ENCODE measurements at regions of chr14 and their contacts with region 1.

Region 1: DNA sequence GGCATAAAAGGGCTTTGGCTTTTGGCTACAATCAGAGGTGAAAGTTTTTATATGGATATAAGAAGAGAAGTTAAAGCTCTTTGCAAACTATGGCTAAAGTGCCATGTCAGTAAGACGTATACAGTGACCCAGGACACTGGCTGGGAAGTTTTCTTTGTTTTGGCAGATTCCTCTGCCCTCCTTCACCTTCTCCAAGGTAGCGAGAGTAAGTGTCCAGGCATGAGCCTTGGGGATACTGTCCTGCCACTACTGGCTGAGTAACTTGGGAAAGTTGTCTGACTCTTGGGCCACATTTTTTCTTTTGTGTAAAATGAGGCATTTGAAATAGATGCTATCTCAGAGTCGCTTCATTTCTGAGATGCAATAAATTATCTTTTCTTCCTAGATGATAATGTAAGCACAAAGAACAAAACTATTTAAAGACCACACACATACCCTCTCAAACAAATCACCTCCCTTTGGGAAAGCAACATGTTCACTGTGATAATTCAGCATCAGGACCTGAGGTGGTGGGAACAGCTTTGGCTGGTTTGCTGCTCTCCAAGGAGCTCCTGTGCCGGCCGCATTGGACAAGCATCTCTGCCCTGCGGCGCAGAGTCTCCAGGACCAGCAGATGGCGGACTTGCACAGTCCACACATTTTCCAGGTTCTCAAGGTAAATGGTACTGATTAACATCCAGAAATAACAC is 106.3 kb downstream of the PTCSC3 start:
- H3K4me3 ChIP-seq: no peak overlapping the region
- H3K27ac ChIP-seq: no peak overlapping the region
- H3K4me1 ChIP-seq: 0 out of 2 replicates have a peak, but pooled peaks cover 3% of the 10 kb centered on the region
- CTCF ChIP-seq: peak; percentile 58; the same call in 1 of the 2 replicates

Region 2: GRCh38 chr14:35965400-35965799 is 104.8 kb before region 1 on chr14:
- CTCF ChIA-PET with region 1: interaction called, 18 read pairs
- POLR2A ChIA-PET with region 1: no interaction called
- H3K4me3 ChIP-seq: no peak overlapping the region
- H3K27ac ChIP-seq: no peak overlapping the region
- H3K4me1 ChIP-seq: no peaks in the 10 kb centered on the region
- CTCF ChIP-seq: no peak

Region 3: GRCh38 chr14:36083317-36083716 is 13.1 kb after region 1 on chr14:
- CTCF ChIA-PET with region 1: interaction called, 29 read pairs
- POLR2A ChIA-PET with region 1: no interaction called
- H3K4me3 ChIP-seq: no peak overlapping the region
- H3K27ac ChIP-seq: no peak overlapping the region
- H3K4me1 ChIP-seq: no peaks in the 10 kb centered on the region
- CTCF ChIP-seq: no peak

Region 4: GRCh38 chr14:36161776-36162175 is 91.6 kb after region 1 on chr14:
- CTCF ChIA-PET with region 1: no interaction called
- POLR2A ChIA-PET with region 1: no interaction called
- H3K4me3 ChIP-seq: no peak overlapping the region
- H3K27ac ChIP-seq: no peak overlapping the region
- H3K4me1 ChIP-seq: no peaks in the 10 kb centered on the region
- CTCF ChIP-seq: no peak

Region 5: GRCh38 chr14:36373982-36374673 is 304.0 kb after region 1 on chr14:
- CTCF ChIA-PET with region 1: interaction called, 46 read pairs
- POLR2A ChIA-PET with region 1: interaction called, 3 read pairs
- H3K4me3 ChIP-seq: no peak overlapping the region
- H3K27ac ChIP-seq: no peak overlapping the region
- H3K4me1 ChIP-seq: no peaks in the 10 kb centered on the region
- CTCF ChIP-seq: 0 out of 2 replicates have a peak, but pooled peaks have one; percentile 25

Region 6: DNA sequence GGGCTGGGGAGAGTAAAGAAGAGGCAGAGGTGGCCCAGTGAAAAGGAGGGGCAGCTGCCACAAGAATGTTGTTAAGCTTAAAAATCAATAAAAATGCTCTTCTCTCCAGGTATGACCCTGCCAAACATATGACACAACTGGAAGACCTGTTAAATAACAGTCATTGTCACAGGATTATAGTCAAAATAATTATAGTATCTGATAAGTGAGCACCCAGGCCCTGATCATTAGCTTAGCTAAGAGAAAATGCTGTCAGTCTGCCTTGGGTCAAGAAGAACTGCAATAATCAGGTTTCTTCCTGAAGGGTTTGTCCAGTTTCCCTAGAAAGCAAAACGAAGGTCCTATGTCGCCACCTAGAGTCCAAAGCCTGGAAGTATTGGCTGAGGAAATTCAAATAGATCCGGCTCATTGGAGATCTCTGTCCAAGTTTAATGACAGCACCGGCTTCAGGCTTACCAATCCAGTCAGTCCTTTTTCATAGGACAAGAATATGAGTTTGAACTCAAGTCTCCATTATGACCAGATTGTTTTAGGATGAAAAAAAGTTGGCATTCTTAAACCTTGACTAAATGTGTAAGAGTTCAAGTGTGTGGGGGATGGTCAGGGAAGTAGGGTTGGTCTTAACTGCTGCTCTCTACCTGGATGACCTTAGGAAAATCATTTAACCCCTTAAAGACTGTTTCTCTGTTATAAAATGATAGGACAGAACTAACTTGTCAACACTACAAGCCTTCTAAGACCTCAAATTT is 534.8 kb after region 1 on chr14:
- CTCF ChIA-PET with region 1: interaction called, 28 read pairs
- POLR2A ChIA-PET with region 1: no interaction called
- H3K4me3 ChIP-seq: no peak overlapping the region
- H3K27ac ChIP-seq: no peak overlapping the region
- H3K4me1 ChIP-seq: no peaks in the 10 kb centered on the region
- CTCF ChIP-seq: peak; percentile 58; the same call in 1 of the 2 replicates